ENCODE measurements at regions of chr7 and their contacts with region 1.

Region 1: GRCh38 chr7:128209229-128210035 is 31.6 kb upstream of the LEP start:
- DNase-seq: peak; percentile 76
- ATAC-seq: peak; percentile 55
- H3K4me3 Mint-ChIP-seq: no peak overlapping the region
- H3K27ac Mint-ChIP-seq: no peak overlapping the region
- H3K4me1 Mint-ChIP-seq: peaks cover 25% of the 10 kb centered on the region
- H3K27me3 Mint-ChIP-seq: peaks cover 23% of the 10 kb centered on the region
- CTCF ChIP-seq: peak; percentile 95

Region 2: DNA sequence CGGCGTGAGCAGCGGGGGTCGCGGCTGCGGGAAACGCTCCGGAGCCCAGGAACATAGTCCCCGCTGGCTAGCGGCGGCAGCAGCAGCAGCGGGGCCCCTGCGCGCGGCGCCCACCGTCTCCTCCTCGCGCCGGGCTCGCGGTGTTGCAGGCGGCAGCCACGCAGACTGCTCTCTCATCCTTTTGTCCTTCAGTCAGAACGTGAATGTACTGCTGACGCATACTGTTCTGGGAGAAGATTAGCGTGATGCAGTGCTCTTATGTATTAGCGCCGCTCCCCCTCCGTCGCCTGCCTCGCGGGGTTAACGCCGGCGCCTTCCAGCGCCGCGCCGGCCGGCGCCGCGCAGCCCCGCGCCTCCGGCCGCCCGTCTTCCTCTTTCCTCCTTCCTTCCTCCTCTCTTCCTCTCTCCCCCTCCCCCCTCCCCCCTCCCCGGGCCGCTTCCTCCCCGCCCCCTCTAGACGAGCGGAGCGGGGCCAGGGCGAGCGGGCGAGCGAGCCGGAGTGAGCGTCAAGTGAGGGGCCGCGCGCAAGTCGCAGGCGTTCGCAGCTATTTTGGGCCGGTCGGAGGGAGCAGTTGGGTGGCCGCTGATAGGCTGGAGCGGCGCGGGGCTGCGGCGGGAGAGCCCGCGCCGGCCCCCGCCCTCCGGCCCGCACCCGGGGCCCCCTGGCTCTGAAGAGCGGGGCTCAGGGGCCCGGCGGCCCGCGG is 177.4 kb before region 1 on chr7:
- CTCF ChIA-PET with region 1: interaction called, 58 read pairs
- POLR2A ChIA-PET with region 1: interaction called, 3 read pairs
- DNase-seq: peak; percentile 56
- ATAC-seq: peak; percentile 29
- H3K4me3 Mint-ChIP-seq: peak overlapping the region; percentile 74
- H3K27ac Mint-ChIP-seq: no peak overlapping the region
- H3K4me1 Mint-ChIP-seq: peaks cover 33% of the 10 kb centered on the region
- H3K27me3 Mint-ChIP-seq: peaks cover 38% of the 10 kb centered on the region
- CTCF ChIP-seq: no peak

Region 3: GRCh38 chr7:128115391-128116332 is 93.8 kb before region 1 on chr7:
- CTCF ChIA-PET with region 1: interaction called, 20 read pairs
- POLR2A ChIA-PET with region 1: no interaction called
- DNase-seq: no peak
- ATAC-seq: no peak; the same call in 1 of the 2 replicates
- H3K4me3 Mint-ChIP-seq: no peak overlapping the region
- H3K27ac Mint-ChIP-seq: no peak overlapping the region
- H3K4me1 Mint-ChIP-seq: peaks cover 6% of the 10 kb centered on the region
- H3K27me3 Mint-ChIP-seq: peaks cover 39% of the 10 kb centered on the region
- CTCF ChIP-seq: no peak

Region 4: GRCh38 chr7:128148676-128149075 is 60.8 kb before region 1 on chr7:
- CTCF ChIA-PET with region 1: interaction called, 40 read pairs
- POLR2A ChIA-PET with region 1: no interaction called
- DNase-seq: no peak
- ATAC-seq: no peak
- H3K4me3 Mint-ChIP-seq: no peak overlapping the region
- H3K27ac Mint-ChIP-seq: no peak overlapping the region
- H3K4me1 Mint-ChIP-seq: peaks cover 28% of the 10 kb centered on the region
- H3K27me3 Mint-ChIP-seq: peaks cover 21% of the 10 kb centered on the region
- CTCF ChIP-seq: no peak

Region 5: DNA sequence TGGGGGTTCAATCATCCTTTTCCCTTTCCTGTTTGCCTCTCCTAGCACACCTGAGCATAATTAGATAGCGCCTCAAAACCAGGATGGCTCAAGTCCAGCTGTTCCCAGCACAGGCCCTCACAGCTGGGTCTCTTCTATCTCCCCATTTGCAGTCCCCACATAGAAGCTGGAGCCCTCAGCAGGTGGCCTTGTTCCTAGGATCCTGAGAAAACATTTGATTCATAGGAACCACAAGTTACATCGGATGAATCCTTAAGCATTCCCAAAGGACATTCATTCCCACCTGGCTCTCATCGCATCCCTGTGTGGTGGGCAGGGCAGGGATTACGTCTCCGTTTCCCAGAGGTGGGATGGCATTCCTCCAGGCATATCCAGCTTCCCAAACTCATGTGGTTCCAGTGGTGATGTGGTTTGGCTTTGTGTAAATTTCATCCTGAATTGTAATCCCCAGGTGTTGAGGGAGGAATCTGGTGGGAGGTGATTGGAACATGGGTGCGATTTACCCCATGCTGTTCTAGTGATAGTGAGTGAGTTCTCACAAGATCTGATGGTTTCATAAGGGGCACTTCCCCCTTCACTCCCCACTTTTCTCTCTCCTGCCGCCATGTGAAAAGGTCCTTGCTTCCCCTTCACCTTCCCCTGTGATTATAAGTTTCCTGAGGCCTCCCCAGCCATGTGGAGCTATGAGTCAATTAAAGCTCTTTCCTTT is 18.1 kb before region 1 on chr7:
- CTCF ChIA-PET with region 1: interaction called, 18 read pairs
- POLR2A ChIA-PET with region 1: no interaction called
- DNase-seq: no peak
- ATAC-seq: no peak
- H3K4me3 Mint-ChIP-seq: no peak overlapping the region
- H3K27ac Mint-ChIP-seq: no peak overlapping the region
- H3K4me1 Mint-ChIP-seq: peaks cover 18% of the 10 kb centered on the region
- H3K27me3 Mint-ChIP-seq: peaks cover 45% of the 10 kb centered on the region
- CTCF ChIP-seq: no peak